ENCODE measurements at regions of chr11 and their contacts with region 1.

Region 1: GRCh38 chr11:68459886-68460740 is 439 bp upstream of the PPP6R3 start:
- DNase-seq: peak; percentile 99
- H3K4me3 ChIP-seq: peak overlapping the region; percentile 91 to 100 (median 97)
- H3K27ac ChIP-seq: peak overlapping the region; percentile 97 to 99 (median 99)
- H3K4me1 ChIP-seq: peaks cover 31 to 48% (median 42%) of the 10 kb centered on the region in 4 donors
- H3K27me3 ChIP-seq: no peaks in the 10 kb centered on the region
- CTCF ChIP-seq: no peak
- EP300 ChIP-seq: no peak
- POLR2A ChIP-seq: no peak

Region 2: GRCh38 chr11:68235650-68236049 is 224.5 kb before region 1 on chr11:
- intact Hi-C with region 1: no loop called
- DNase-seq: no peak
- H3K4me3 ChIP-seq: no peak overlapping the region
- H3K27ac ChIP-seq: no peak overlapping the region
- H3K4me1 ChIP-seq: no peaks in the 10 kb centered on the region
- H3K27me3 ChIP-seq: peaks cover 0 to 4% (median 0%) of the 10 kb centered on the region in 4 donors
- CTCF ChIP-seq: no peak
- EP300 ChIP-seq: no peak
- POLR2A ChIP-seq: no peak

Region 3: GRCh38 chr11:68412593-68413475 is 47.3 kb before region 1 on chr11:
- intact Hi-C with region 1: no loop called
- DNase-seq: no peak
- H3K4me3 ChIP-seq: no peak overlapping the region
- H3K27ac ChIP-seq: peak overlapping the region; percentile 44 to 64 (median 54)
- H3K4me1 ChIP-seq: peaks cover 0 to 27% (median 21%) of the 10 kb centered on the region in 4 donors
- H3K27me3 ChIP-seq: no peaks in the 10 kb centered on the region
- CTCF ChIP-seq: no peak
- EP300 ChIP-seq: no peak
- POLR2A ChIP-seq: no peak

Region 4: DNA sequence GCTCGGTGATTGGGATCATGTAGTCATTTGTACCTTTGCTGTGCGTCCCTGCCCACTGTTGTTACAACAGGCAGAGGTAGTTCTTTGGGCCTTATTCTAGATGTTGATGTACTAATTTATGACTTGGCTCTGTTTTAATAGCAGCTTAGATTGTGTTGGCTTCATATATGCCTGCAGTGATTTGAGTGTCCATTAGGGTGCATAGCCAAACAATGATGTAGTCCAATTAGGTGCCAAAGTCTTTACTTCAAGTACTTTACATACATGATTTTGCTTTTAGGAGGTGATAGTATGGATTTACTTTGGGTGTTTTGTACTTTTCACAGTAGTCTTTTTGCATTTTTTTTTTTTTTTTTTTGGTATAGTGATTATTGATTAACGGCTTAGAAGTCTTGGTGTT is 46.8 kb after region 1 on chr11:
- intact Hi-C with region 1: no loop called
- DNase-seq: no peak
- H3K4me3 ChIP-seq: no peak overlapping the region
- H3K27ac ChIP-seq: no peak overlapping the region
- H3K4me1 ChIP-seq: peaks cover 70 to 100% (median 88%) of the 10 kb centered on the region in 4 donors
- H3K27me3 ChIP-seq: no peaks in the 10 kb centered on the region
- CTCF ChIP-seq: peak in 1 of 3 experiments; percentile 5
- EP300 ChIP-seq: no peak
- POLR2A ChIP-seq: no peak

Region 5: GRCh38 chr11:68542617-68543016 is 82.5 kb after region 1 on chr11:
- intact Hi-C with region 1: loop called (anchors 5 kb)
- DNase-seq: no peak
- H3K4me3 ChIP-seq: no peak overlapping the region
- H3K27ac ChIP-seq: peak overlapping the region; percentile 37 to 61 (median 60)
- H3K4me1 ChIP-seq: peaks cover 26 to 66% (median 57%) of the 10 kb centered on the region in 4 donors
- H3K27me3 ChIP-seq: no peaks in the 10 kb centered on the region
- CTCF ChIP-seq: no peak
- EP300 ChIP-seq: no peak
- POLR2A ChIP-seq: no peak

Measured in esophagus muscularis mucosa (tissue), 4 donors.